ENCODE measurements at regions of chr3 and their contacts with region 1.

Region 1: GRCh38 chr3:12967606-12968351 is 105.5 kb downstream of the IQSEC1 start:
- DNase-seq: peak; percentile 95
- ATAC-seq: peak; percentile 86
- H3K4me3 Mint-ChIP-seq: peak overlapping the region; percentile 66
- H3K27ac Mint-ChIP-seq: peak overlapping the region; percentile 52
- H3K4me1 Mint-ChIP-seq: peaks cover 59% of the 10 kb centered on the region
- H3K27me3 Mint-ChIP-seq: no peaks in the 10 kb centered on the region

Region 2: GRCh38 chr3:12663936-12664908 is 303.6 kb before region 1 on chr3 and contains the start of gene RAF1:
- CTCF ChIA-PET with region 1: no interaction called
- POLR2A ChIA-PET with region 1: no interaction called
- intact Hi-C with region 1: loop called in 1 of 2 experiments (anchors 1 kb)
- DNase-seq: peak; percentile 99
- ATAC-seq: peak; percentile 94
- H3K4me3 Mint-ChIP-seq: peak within 1 kb of the TSS; percentile 81
- H3K27ac Mint-ChIP-seq: peak within 1 kb of the TSS; percentile 96
- H3K4me1 Mint-ChIP-seq: peaks cover 25% of the 10 kb centered on the region
- H3K27me3 Mint-ChIP-seq: no peaks in the 10 kb centered on the region
- total RNA-seq, gene RAF1: 66.8 to 74.7 TPM

Region 3: GRCh38 chr3:12841149-12841970 is 126.4 kb before region 1 on chr3 and contains the start of gene RPL32:
- CTCF ChIA-PET with region 1: interaction called, 3 read pairs
- POLR2A ChIA-PET with region 1: no interaction called
- intact Hi-C with region 1: loop called in 1 of 2 experiments (anchors 1 kb)
- DNase-seq: peak; percentile 92
- ATAC-seq: peak; percentile 90
- H3K4me3 Mint-ChIP-seq: peak within 1 kb of the TSS; percentile 98
- H3K27ac Mint-ChIP-seq: peak within 1 kb of the TSS; percentile 99
- H3K4me1 Mint-ChIP-seq: peaks cover 43% of the 10 kb centered on the region
- H3K27me3 Mint-ChIP-seq: no peaks in the 10 kb centered on the region
- total RNA-seq, gene RPL32: 2,842 to 4,727 TPM

Region 4: GRCh38 chr3:12948891-12949711 is 18.7 kb before region 1 on chr3:
- CTCF ChIA-PET with region 1: interaction called, 4 read pairs
- POLR2A ChIA-PET with region 1: interaction called, 7 read pairs
- intact Hi-C with region 1: loop called (anchors 1 kb)
- DNase-seq: peak; percentile 78
- ATAC-seq: peak; percentile 89
- H3K4me3 Mint-ChIP-seq: peak overlapping the region; percentile 40
- H3K27ac Mint-ChIP-seq: peak overlapping the region; percentile 90
- H3K4me1 Mint-ChIP-seq: peaks cover 44% of the 10 kb centered on the region
- H3K27me3 Mint-ChIP-seq: no peaks in the 10 kb centered on the region

Region 5: GRCh38 chr3:12994607-12995388 is 27.0 kb after region 1 on chr3:
- CTCF ChIA-PET with region 1: interaction called, 6 read pairs
- POLR2A ChIA-PET with region 1: no interaction called
- intact Hi-C with region 1: loop called in 1 of 2 experiments (anchors 1 kb)
- DNase-seq: peak; percentile 93
- ATAC-seq: peak; percentile 91
- H3K4me3 Mint-ChIP-seq: peak overlapping the region; percentile 90
- H3K27ac Mint-ChIP-seq: peak overlapping the region; percentile 81
- H3K4me1 Mint-ChIP-seq: peaks cover 56% of the 10 kb centered on the region
- H3K27me3 Mint-ChIP-seq: no peaks in the 10 kb centered on the region

Region 6: GRCh38 chr3:13479581-13480339 is 512.0 kb after region 1 on chr3 and contains the start of gene HDAC11:
- CTCF ChIA-PET with region 1: no interaction called
- POLR2A ChIA-PET with region 1: no interaction called
- intact Hi-C with region 1: loop called (anchors 1 to 2 kb)
- DNase-seq: peak; percentile 99
- ATAC-seq: peak; percentile 96
- H3K4me3 Mint-ChIP-seq: peak within 1 kb of the TSS; percentile 89
- H3K27ac Mint-ChIP-seq: peak within 1 kb of the TSS; percentile 90
- H3K4me1 Mint-ChIP-seq: peaks cover 20% of the 10 kb centered on the region
- H3K27me3 Mint-ChIP-seq: no peaks in the 10 kb centered on the region
- total RNA-seq, gene HDAC11: 3.4 to 4.1 TPM

Region 7: DNA sequence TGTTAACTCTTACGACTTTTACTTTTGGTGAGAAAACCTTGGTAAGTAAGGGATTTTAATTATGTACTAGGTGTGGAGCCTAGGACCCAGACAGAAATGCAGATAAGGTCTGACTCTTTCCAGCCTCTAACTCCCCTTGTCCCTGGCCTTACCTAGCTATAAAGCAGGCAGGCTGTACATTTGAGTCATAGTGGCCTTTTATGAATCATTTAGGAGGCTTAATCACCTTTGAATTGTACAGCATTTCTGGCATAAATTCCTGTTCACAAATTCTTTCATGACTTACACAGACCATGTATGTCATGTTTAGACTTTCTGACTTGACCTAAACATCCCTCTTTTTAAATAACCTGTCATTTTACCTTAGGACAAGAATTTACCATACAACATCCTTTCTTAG is 1109.5 kb after region 1 on chr3:
- CTCF ChIA-PET with region 1: no interaction called
- POLR2A ChIA-PET with region 1: no interaction called
- intact Hi-C with region 1: no loop called
- DNase-seq: no peak
- ATAC-seq: peak; percentile 37
- H3K4me3 Mint-ChIP-seq: no peak overlapping the region
- H3K27ac Mint-ChIP-seq: no peak overlapping the region
- H3K4me1 Mint-ChIP-seq: peaks cover 6% of the 10 kb centered on the region
- H3K27me3 Mint-ChIP-seq: peaks cover 11% of the 10 kb centered on the region